CD4-positive, alpha-beta memory T cell (primary cell): ENCODE measurements at regions of chr3 and their contacts with region 1.

Region 1: GRCh38 chr3:66971891-66972551 is 26.1 kb upstream of the KBTBD8 start:
- DNase-seq: peak; percentile 43 to 59 (median 53)
- H3K4me3 ChIP-seq: peak overlapping the region; percentile 47 to 59
- H3K4me3 Mint-ChIP-seq: peak overlapping the region; percentile 86 to 92 (median 88)
- H3K27ac ChIP-seq: no peak overlapping the region
- H3K27ac Mint-ChIP-seq: peak overlapping the region; percentile 38 to 86 (median 70)
- H3K4me1 ChIP-seq: peaks cover 13% of the 10 kb centered on the region
- H3K4me1 Mint-ChIP-seq: peaks cover 6 to 12% (median 9%) of the 10 kb centered on the region in 4 donors
- H3K27me3 ChIP-seq: no peaks in the 10 kb centered on the region
- H3K27me3 Mint-ChIP-seq: no peaks in the 10 kb centered on the region

Region 2: GRCh38 chr3:66625505-66626216 is 346.4 kb before region 1 on chr3:
- CTCF ChIA-PET with region 1: no interaction called
- POLR2A ChIA-PET with region 1: no interaction called
- intact Hi-C with region 1: no loop called
- DNase-seq: no peak
- H3K4me3 ChIP-seq: no peak overlapping the region
- H3K4me3 Mint-ChIP-seq: no peak overlapping the region
- H3K27ac ChIP-seq: no peak overlapping the region
- H3K27ac Mint-ChIP-seq: peak overlapping the region in 1 of 7 donors; percentile 37
- H3K4me1 ChIP-seq: no peaks in the 10 kb centered on the region
- H3K4me1 Mint-ChIP-seq: no peaks in the 10 kb centered on the region
- H3K27me3 ChIP-seq: no peaks in the 10 kb centered on the region
- H3K27me3 Mint-ChIP-seq: no peaks in the 10 kb centered on the region

Region 3: DNA sequence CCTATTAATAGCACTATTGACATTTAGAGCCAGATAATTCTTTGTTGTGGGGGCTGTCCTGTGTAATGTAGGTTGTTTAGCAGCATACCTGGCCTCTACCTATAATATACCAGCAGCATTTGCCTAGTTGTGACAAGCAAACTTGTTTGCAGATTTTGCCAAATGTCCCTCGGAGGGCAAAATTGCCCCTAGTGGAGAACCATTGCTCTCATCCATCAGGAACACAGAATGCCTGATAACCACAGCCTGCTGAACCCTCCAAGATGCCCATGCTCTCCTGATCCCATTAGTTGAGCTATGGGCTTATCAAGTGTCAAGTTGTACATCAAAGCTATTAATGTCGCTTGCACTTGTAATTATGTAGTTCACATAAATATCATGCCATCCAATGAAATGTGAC is 11.1 kb after region 1 on chr3:
- CTCF ChIA-PET with region 1: interaction called, 53 read pairs
- POLR2A ChIA-PET with region 1: no interaction called
- intact Hi-C with region 1: no loop called
- DNase-seq: no peak
- H3K4me3 ChIP-seq: no peak overlapping the region
- H3K4me3 Mint-ChIP-seq: no peak overlapping the region
- H3K27ac ChIP-seq: no peak overlapping the region
- H3K27ac Mint-ChIP-seq: no peak overlapping the region
- H3K4me1 ChIP-seq: no peaks in the 10 kb centered on the region
- H3K4me1 Mint-ChIP-seq: no peaks in the 10 kb centered on the region
- H3K27me3 ChIP-seq: no peaks in the 10 kb centered on the region
- H3K27me3 Mint-ChIP-seq: peaks cover 0 to 1% of the 10 kb centered on the region in 2 donors

Region 4: GRCh38 chr3:66998113-66998903 is 26.3 kb after region 1 on chr3 and contains the start of gene KBTBD8:
- CTCF ChIA-PET with region 1: interaction called, 40 read pairs
- POLR2A ChIA-PET with region 1: interaction called, 20 read pairs
- intact Hi-C with region 1: loop called (anchors 1 kb)
- DNase-seq: peak; percentile 98 to 99 (median 98)
- H3K4me3 ChIP-seq: peak within 1 kb of the TSS; percentile 57 to 85
- H3K4me3 Mint-ChIP-seq: peak within 1 kb of the TSS; percentile 90 to 96 (median 94)
- H3K27ac ChIP-seq: peak within 1 kb of the TSS; percentile 67
- H3K27ac Mint-ChIP-seq: peak within 1 kb of the TSS; percentile 88 to 97 (median 95)
- H3K4me1 ChIP-seq: peaks cover 39% of the 10 kb centered on the region
- H3K4me1 Mint-ChIP-seq: peaks cover 23 to 48% (median 30%) of the 10 kb centered on the region in 4 donors
- H3K27me3 ChIP-seq: peaks cover 3% of the 10 kb centered on the region
- H3K27me3 Mint-ChIP-seq: peaks cover 0 to 4% of the 10 kb centered on the region in 2 donors
- total RNA-seq, gene KBTBD8: 8.3 to 10.8 TPM

Region 5: GRCh38 chr3:67106874-67107273 is 134.9 kb after region 1 on chr3:
- CTCF ChIA-PET with region 1: interaction called, 15 read pairs
- POLR2A ChIA-PET with region 1: no interaction called
- intact Hi-C with region 1: no loop called
- DNase-seq: no peak
- H3K4me3 ChIP-seq: no peak overlapping the region
- H3K4me3 Mint-ChIP-seq: no peak overlapping the region
- H3K27ac ChIP-seq: no peak overlapping the region
- H3K27ac Mint-ChIP-seq: no peak overlapping the region
- H3K4me1 ChIP-seq: no peaks in the 10 kb centered on the region
- H3K4me1 Mint-ChIP-seq: no peaks in the 10 kb centered on the region
- H3K27me3 ChIP-seq: no peaks in the 10 kb centered on the region
- H3K27me3 Mint-ChIP-seq: peaks cover 1 to 3% of the 10 kb centered on the region in 2 donors

Region 6: GRCh38 chr3:67357610-67358458 is 385.8 kb after region 1 on chr3:
- CTCF ChIA-PET with region 1: interaction called, 5 read pairs
- POLR2A ChIA-PET with region 1: no interaction called
- intact Hi-C with region 1: loop called (anchors 5 kb)
- DNase-seq: no peak
- H3K4me3 ChIP-seq: no peak overlapping the region
- H3K4me3 Mint-ChIP-seq: peak overlapping the region in 1 of 8 donors; percentile 36
- H3K27ac ChIP-seq: no peak overlapping the region
- H3K27ac Mint-ChIP-seq: no peak overlapping the region
- H3K4me1 ChIP-seq: peaks cover 2% of the 10 kb centered on the region
- H3K4me1 Mint-ChIP-seq: peaks cover 4 to 10% (median 8%) of the 10 kb centered on the region in 4 donors
- H3K27me3 ChIP-seq: no peaks in the 10 kb centered on the region
- H3K27me3 Mint-ChIP-seq: peaks cover 0 to 2% of the 10 kb centered on the region in 2 donors

Region 7: GRCh38 chr3:67790043-67790442 is 818.0 kb after region 1 on chr3:
- CTCF ChIA-PET with region 1: interaction called, 13 read pairs
- POLR2A ChIA-PET with region 1: no interaction called
- intact Hi-C with region 1: loop called (anchors 1 kb)
- DNase-seq: peak; percentile 55 to 68 (median 58)
- H3K4me3 ChIP-seq: no peak overlapping the region
- H3K4me3 Mint-ChIP-seq: no peak overlapping the region
- H3K27ac ChIP-seq: no peak overlapping the region
- H3K27ac Mint-ChIP-seq: no peak overlapping the region
- H3K4me1 ChIP-seq: no peaks in the 10 kb centered on the region
- H3K4me1 Mint-ChIP-seq: peaks cover 4 to 10% (median 5%) of the 10 kb centered on the region in 4 donors
- H3K27me3 ChIP-seq: no peaks in the 10 kb centered on the region
- H3K27me3 Mint-ChIP-seq: no peaks in the 10 kb centered on the region

Region 8: GRCh38 chr3:68893600-68894239 is 1921.7 kb after region 1 on chr3:
- CTCF ChIA-PET with region 1: interaction called, 35 read pairs
- POLR2A ChIA-PET with region 1: interaction called, 5 read pairs
- intact Hi-C with region 1: loop called (anchors 1 kb)
- DNase-seq: peak in 4 of 5 donors; percentile 29 to 36 (median 32)
- H3K4me3 ChIP-seq: no peak overlapping the region
- H3K4me3 Mint-ChIP-seq: no peak overlapping the region
- H3K27ac ChIP-seq: no peak overlapping the region
- H3K27ac Mint-ChIP-seq: no peak overlapping the region
- H3K4me1 ChIP-seq: no peaks in the 10 kb centered on the region
- H3K4me1 Mint-ChIP-seq: no peaks in the 10 kb centered on the region
- H3K27me3 ChIP-seq: no peaks in the 10 kb centered on the region
- H3K27me3 Mint-ChIP-seq: peaks cover 7 to 14% of the 10 kb centered on the region in 2 donors